RWPE1 (cell line): ENCODE measurements at regions of chr9 and their contacts with region 1.

Region 1: GRCh38 chr9:125407974-125408900 is 146.6 kb downstream of the GAPVD1 start:
- DNase-seq: peak; percentile 95
- H3K27ac ChIP-seq: no peak overlapping the region
- CTCF ChIP-seq: peak; percentile 98

Region 2: DNA sequence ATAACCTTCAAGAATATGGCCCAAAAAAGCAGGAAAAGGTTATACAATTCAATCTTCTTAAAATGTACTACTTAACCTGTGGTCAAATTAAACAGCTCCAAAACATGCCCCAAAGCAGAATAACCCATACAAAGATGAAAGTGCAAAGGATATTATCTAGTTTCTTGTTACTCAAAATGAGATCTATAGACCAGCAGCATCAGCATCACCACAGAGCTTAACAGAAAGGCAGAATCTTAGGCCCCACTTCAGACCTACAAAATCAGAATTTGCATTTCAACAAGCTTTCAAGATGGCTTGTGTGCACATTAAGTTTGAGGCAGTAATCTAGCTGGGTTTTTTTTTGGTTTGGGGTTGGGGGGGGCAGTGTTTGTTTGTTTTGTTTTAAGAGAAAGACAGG is 318.9 kb before region 1 on chr9:
- CTCF ChIA-PET with region 1: no interaction called
- POLR2A ChIA-PET with region 1: no interaction called
- DNase-seq: no peak
- H3K27ac ChIP-seq: no peak overlapping the region
- CTCF ChIP-seq: no peak

Region 3: DNA sequence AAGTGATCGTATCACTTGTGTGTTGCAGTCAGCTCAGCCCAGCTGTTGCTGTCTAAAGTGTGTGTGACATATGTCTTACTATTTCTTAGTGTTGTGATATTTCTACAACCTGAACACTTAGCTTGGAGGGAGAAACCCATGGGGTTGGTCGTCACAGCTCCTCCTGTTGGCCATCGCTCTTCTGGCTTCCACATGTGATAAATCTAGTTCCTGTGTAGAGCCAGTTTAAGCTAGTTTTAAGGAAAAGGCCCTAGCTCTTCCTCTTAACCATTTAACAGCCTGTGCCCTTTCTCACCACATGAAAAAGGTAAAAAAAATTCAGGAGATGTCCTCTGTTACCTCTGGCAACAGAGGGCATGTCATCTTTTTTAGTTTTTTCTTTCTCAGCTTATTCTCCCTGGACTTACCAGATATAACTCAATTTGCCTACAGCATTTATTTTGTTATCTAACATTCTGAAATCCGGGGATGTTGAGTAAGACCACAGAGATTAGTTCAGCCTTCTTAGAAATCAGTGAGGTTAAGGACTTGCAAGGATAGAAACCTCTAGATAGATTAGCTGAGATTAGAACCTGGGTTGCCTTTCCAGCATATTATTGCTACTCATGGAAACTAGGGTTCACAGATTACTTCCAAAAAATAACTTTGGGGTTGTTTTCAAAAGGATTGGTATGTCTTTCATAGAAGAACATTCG is 46.3 kb before region 1 on chr9:
- CTCF ChIA-PET with region 1: no interaction called
- POLR2A ChIA-PET with region 1: no interaction called
- DNase-seq: no peak
- H3K27ac ChIP-seq: no peak overlapping the region
- CTCF ChIP-seq: peak; percentile 13; the same call in 1 of the 2 replicates

Region 4: DNA sequence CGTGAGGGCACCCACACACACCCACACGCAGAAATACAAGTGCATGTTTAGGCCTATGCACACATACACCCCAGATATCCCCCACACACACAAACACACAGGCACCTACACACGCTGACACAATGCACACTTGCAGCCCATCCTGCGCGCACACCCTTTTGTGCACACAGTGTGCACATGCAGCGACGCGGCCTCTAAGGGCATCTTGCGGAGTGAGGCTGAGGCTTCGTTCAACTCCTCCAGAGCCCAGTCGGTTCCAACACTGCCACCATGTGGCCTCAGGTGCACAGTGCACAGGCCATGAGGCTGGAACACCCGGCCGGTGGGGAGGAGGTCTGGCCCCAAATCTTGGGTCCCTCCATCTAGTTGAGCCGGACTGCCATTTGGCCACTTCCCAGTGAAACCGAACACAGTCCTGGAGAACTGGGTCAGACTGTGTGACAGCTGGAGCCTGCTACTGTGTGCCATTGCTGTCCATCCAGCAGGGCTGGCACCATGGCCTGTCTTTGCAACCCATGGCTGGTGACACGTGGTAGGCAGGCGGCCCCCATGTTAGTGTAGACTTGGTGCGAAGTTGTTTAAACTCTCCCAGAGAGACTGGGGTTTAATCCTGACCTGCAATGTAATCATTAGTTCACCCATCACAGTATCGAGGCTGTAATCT is 820.7 kb after region 1 on chr9:
- CTCF ChIA-PET with region 1: interaction called, 11 read pairs
- POLR2A ChIA-PET with region 1: no interaction called
- DNase-seq: peak; percentile 88
- H3K27ac ChIP-seq: no peak overlapping the region
- CTCF ChIP-seq: peak; percentile 98